AG04450 (cell line): ENCODE measurements at regions of chr11 and their contacts with region 1.

Region 1: GRCh38 chr11:94602430-94603372 is 35.5 kb downstream of the PIWIL4 start:
- DNase-seq: peak; percentile 81
- H3K4me3 ChIP-seq: no peak overlapping the region
- H3K27ac ChIP-seq: no peak overlapping the region
- H3K27me3 ChIP-seq: no peaks in the 10 kb centered on the region
- CTCF ChIP-seq: peak; percentile 78

Region 2: GRCh38 chr11:94511932-94512781 is 90.5 kb before region 1 on chr11 and contains the start of gene C11orf97:
- CTCF ChIA-PET with region 1: interaction called, 212 read pairs
- POLR2A ChIA-PET with region 1: no interaction called
- DNase-seq: no peak
- H3K4me3 ChIP-seq: peak within 1 kb of the TSS; percentile 71
- H3K27ac ChIP-seq: no peak within 1 kb of the TSS
- H3K27me3 ChIP-seq: peaks cover 16% of the 10 kb centered on the region
- CTCF ChIP-seq: no peak
- polyA plus RNA-seq, gene C11orf97: not detected in 2 replicates

Region 3: DNA sequence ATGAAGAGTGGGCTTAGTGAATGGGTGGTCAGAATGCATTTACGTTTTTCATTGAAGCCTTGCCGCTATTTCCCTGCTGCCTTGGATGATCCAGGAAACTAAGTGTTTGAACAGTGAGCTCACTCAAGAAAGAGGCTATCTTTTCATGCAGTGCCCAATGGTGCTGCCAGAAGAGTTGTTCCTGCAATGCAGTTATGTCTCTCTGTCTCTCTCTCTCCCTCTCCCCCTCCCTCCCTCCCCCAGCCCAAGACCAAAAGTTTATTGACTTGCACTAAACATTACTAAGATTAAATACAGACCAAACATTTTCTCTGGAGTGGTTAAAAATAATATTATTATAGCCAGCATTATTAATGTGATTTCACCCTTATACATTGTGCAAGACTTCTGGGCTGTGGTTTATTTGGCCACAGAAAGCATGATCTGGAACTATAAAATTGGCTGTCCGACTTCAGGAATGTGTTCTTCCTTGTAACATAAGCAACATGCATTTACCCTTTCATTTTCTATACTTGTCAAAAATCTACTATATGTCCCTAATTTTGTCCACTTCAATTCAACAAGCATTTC is 65.6 kb before region 1 on chr11:
- CTCF ChIA-PET with region 1: interaction called, 11 read pairs
- POLR2A ChIA-PET with region 1: no interaction called
- DNase-seq: peak; percentile 44
- H3K4me3 ChIP-seq: no peak overlapping the region
- H3K27ac ChIP-seq: no peak overlapping the region
- H3K27me3 ChIP-seq: no peaks in the 10 kb centered on the region
- CTCF ChIP-seq: no peak

Region 4: DNA sequence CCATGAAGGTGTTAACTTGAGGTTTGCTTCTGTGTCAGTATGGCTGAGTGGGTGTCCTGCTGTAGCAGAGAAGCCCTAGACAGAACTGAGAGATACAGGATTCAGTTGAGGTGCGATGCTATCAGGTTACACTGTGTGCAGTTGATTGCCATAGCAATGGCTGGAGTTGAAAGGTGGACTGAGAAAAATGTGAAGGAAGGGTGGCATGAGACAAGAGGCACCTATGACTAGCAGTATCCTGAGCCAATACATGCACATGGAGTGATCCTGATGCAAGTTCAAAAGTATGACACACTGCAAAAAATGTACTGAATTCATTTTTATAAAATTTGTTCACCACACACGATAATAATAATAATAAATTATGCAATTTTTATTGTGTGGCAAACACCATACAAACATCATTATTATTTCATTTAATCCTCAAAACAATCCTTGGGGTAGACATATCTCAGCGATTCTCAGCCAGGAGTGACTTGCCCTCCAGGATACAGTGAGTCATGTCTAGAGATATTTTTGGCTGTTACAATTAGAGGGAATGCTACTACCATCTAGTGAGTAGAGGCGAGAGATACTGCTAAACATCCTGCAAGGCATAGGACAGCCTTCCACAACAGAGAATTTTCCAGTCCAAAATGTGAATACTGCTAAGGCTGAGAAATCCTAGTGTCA is 39.4 kb before region 1 on chr11:
- CTCF ChIA-PET with region 1: interaction called, 11 read pairs
- POLR2A ChIA-PET with region 1: no interaction called
- DNase-seq: peak; percentile 18
- H3K4me3 ChIP-seq: no peak overlapping the region
- H3K27ac ChIP-seq: no peak overlapping the region
- H3K27me3 ChIP-seq: no peaks in the 10 kb centered on the region
- CTCF ChIP-seq: no peak; the same call in 1 of the 2 replicates

Region 5: GRCh38 chr11:94613120-94613519 is 10.4 kb after region 1 on chr11:
- CTCF ChIA-PET with region 1: interaction called, 45 read pairs
- POLR2A ChIA-PET with region 1: no interaction called
- DNase-seq: no peak
- H3K4me3 ChIP-seq: no peak overlapping the region
- H3K27ac ChIP-seq: no peak overlapping the region
- H3K27me3 ChIP-seq: no peaks in the 10 kb centered on the region
- CTCF ChIP-seq: no peak